HepG2 (cell line): ENCODE measurements at regions of chr2 and their contacts with region 1.

Region 1: DNA sequence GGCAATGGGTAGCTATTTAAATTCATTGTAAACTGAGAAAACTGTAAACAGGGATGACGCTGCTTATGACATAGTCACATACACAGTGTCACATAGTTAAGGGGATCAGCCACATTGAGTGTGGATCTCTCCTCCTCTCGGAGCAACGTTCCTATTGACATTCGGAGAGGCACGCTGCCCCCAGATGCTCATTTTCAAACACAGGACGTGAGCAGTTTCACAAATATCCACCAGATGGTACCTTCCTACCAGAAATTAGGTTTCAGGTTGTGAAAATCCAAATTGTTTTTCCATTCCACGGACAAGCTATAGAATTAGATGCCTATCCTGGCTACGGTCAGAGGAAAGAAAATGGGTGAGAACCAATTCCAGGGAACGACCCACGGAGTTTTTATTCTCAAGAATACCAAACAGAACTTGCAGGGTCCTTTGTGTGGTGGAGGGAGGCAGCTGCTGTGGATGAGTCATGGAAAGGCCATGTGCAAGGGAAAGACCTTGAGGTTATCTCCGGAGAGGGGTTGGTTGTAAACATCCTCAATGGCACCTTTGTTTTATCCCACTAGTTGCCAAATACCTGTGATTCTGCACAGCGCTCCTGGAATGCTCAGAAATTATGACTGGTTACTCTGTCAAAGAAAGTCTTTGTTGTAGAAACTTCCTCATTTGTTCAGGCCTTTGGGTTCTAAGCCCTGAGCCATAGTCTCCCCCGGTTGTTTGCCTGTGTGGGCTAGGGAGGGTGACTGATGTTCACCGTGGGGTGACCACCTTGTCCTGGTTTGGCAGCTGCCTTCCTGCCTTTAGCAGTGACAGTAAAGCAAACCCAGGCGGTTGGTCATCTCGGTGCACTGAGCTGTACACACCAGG is 88.0 kb downstream of the ACTR3 start:
- DNase-seq: peak; percentile 100
- ATAC-seq: peak; percentile 92
- H3K4me3 ChIP-seq: peak overlapping the region in 1 of 3 experiments; percentile 41; a peak in 2 of 6 replicates
- H3K27ac ChIP-seq: peak overlapping the region; percentile 97
- H3K4me1 ChIP-seq: peaks cover 89% of the 10 kb centered on the region
- H3K27me3 ChIP-seq: no peaks in the 10 kb centered on the region
- CTCF ChIP-seq: peak; percentile 92
- EP300 ChIP-seq: peak; percentile 98 to 100
- POLR2A ChIP-seq: peak; percentile 76 to 95
- RAD21 ChIP-seq: peak; percentile 86

Region 2: GRCh38 chr2:113602869-113603466 is 374.9 kb before region 1 on chr2:
- CTCF ChIA-PET with region 1: interaction called, 3 read pairs
- POLR2A ChIA-PET with region 1: no interaction called
- in situ Hi-C with region 1: no loop called
- intact Hi-C with region 1: loop called (anchors 5 kb)
- DNase-seq: no peak
- ATAC-seq: peak; percentile 89
- H3K4me3 ChIP-seq: peak overlapping the region; percentile 60 to 90 (median 70); a peak in 5 of 6 replicates
- H3K27ac ChIP-seq: peak overlapping the region; percentile 90
- H3K4me1 ChIP-seq: peaks cover 6% of the 10 kb centered on the region
- H3K27me3 ChIP-seq: no peaks in the 10 kb centered on the region; a peak in 1 of 5 replicates
- CTCF ChIP-seq: no peak
- EP300 ChIP-seq: no peak
- POLR2A ChIP-seq: no peak
- RAD21 ChIP-seq: no peak

Region 3: GRCh38 chr2:113889471-113890252 is 88.2 kb before region 1 on chr2 and contains the start of gene ACTR3:
- CTCF ChIA-PET with region 1: no interaction called
- POLR2A ChIA-PET with region 1: interaction called, 19 read pairs
- in situ Hi-C with region 1: no loop called
- intact Hi-C with region 1: loop called (anchors 1 kb)
- DNase-seq: peak; percentile 98
- ATAC-seq: peak; percentile 91
- H3K4me3 ChIP-seq: peak within 1 kb of the TSS; percentile 92 to 96 (median 95)
- H3K27ac ChIP-seq: peak within 1 kb of the TSS; percentile 94
- H3K4me1 ChIP-seq: peaks cover 62% of the 10 kb centered on the region
- H3K27me3 ChIP-seq: no peaks in the 10 kb centered on the region; a peak in 1 of 5 replicates
- CTCF ChIP-seq: peak; percentile 36; the same call in 1 of the 2 replicates
- EP300 ChIP-seq: 0 out of 4 replicates have a peak, but pooled peaks of 1 of the 2 experiments have one; percentile 40
- POLR2A ChIP-seq: peak; percentile 93 to 99
- RAD21 ChIP-seq: peak; percentile 51
- total RNA-seq, gene ACTR3: 225 and 321 TPM in 2 replicates

Region 4: DNA sequence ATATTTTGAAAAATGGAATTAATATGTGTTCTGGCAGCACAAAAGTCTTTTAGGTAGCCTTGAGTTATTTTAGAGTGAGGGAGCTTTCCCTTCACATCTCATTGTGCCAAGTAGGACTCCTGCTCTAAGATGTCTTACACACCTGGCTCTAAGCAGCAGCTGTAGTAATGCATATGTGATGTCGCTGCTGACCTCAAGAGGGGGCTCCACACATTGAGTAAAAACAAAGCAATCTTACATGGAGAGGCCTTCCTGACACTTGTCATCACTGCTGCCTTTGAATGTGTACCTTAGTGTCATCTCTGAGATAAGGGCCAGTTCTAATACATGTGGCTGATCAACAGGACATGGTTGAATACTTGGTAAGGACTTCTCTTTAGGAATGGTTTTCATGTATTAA is 12.2 kb before region 1 on chr2:
- CTCF ChIA-PET with region 1: interaction called, 70 read pairs
- POLR2A ChIA-PET with region 1: interaction called, 103 read pairs
- in situ Hi-C with region 1: no loop called
- intact Hi-C with region 1: loop called (anchors 1 kb)
- DNase-seq: peak; percentile 94
- ATAC-seq: peak; percentile 94
- H3K4me3 ChIP-seq: no peak overlapping the region
- H3K27ac ChIP-seq: peak overlapping the region; percentile 79
- H3K4me1 ChIP-seq: peaks cover 43% of the 10 kb centered on the region
- H3K27me3 ChIP-seq: no peaks in the 10 kb centered on the region
- CTCF ChIP-seq: peak; percentile 97
- EP300 ChIP-seq: peak in 1 of 2 experiments; percentile 48; a peak in 1 of 4 replicates
- POLR2A ChIP-seq: no peak
- RAD21 ChIP-seq: peak; percentile 87

Region 5: DNA sequence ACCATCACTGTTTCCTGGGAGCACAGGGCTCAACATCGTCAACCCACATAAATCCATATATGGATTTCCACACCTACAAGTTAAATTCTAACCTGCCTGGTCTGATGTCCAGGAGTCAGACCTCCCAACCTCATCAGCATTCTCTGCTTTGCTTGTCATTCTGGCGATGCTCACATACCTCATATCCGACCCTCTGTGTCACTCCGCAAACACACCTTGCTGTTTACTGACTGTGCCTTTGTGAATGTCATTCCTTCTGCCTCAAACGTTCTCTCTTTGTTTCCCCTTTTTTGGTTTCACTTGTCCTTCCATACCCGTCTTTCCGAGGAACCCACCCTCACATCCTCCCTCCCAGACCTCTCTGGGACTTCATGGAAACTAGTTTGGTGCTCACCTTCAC is 99.1 kb after region 1 on chr2:
- CTCF ChIA-PET with region 1: no interaction called
- POLR2A ChIA-PET with region 1: interaction called, 4 read pairs
- in situ Hi-C with region 1: no loop called
- intact Hi-C with region 1: loop called (anchors 5 kb)
- DNase-seq: peak; percentile 73
- ATAC-seq: peak; percentile 81
- H3K4me3 ChIP-seq: 0 out of 6 replicates have a peak overlapping the region, but pooled peaks of 1 of the 3 experiments have one; percentile 3
- H3K27ac ChIP-seq: no peak overlapping the region
- H3K4me1 ChIP-seq: peaks cover 30% of the 10 kb centered on the region
- H3K27me3 ChIP-seq: peaks cover 0 to 7% of the 10 kb centered on the region in 2 experiments; a peak in 1 of 5 replicates
- CTCF ChIP-seq: no peak
- EP300 ChIP-seq: no peak
- POLR2A ChIP-seq: no peak
- RAD21 ChIP-seq: no peak

Region 6: DNA sequence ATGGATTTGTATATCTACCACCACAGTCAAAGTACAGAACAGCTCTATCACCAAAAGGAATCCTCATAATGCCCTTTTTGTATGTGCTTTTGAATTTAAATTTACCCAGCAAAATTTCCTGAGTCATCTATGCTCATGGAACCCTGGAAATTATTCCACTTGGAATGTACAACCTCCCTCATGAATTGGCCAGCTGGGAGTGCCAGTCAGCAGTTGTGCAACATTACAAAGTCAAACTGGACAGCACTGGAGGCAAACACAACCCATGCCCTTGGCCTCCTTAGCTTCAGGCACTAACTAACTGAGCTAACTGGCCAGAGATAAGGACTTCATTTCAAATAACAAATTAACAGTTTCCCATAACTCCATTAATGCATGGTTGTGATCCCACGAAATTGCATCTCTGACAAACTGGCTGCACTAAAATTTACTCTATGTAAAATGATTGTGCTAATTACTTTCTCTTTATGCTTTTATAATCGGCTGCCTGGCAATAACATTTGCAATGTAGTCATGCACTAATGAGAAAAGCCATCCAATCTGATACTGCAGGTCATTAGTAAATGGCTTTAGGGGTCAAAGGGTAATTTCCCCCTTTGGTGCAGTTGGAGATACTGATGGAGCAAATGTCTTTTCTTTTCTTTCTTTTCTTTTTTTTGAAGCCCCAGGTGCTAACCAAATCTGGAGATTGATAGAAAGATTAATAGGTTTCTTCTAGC is 182.5 kb after region 1 on chr2:
- CTCF ChIA-PET with region 1: no interaction called
- POLR2A ChIA-PET with region 1: no interaction called
- in situ Hi-C with region 1: no loop called
- intact Hi-C with region 1: loop called (anchors 5 kb)
- DNase-seq: peak; percentile 80
- ATAC-seq: peak; percentile 98
- H3K4me3 ChIP-seq: no peak overlapping the region
- H3K27ac ChIP-seq: no peak overlapping the region
- H3K4me1 ChIP-seq: peaks cover 12% of the 10 kb centered on the region
- H3K27me3 ChIP-seq: 0 out of 5 replicates have a peak, but pooled peaks cover 0 to 3% of the 10 kb centered on the region in 2 experiments
- CTCF ChIP-seq: peak; percentile 37
- EP300 ChIP-seq: peak in 1 of 2 experiments; percentile 76; a peak in 2 of 4 replicates
- POLR2A ChIP-seq: no peak
- RAD21 ChIP-seq: no peak